Activated B cell treated with CpG ODN at 0.5 μM for 24 hours (primary cell): ENCODE measurements at regions of chr16 and their contacts with region 1.

Region 1: GRCh38 chr16:24975428-24975889 is 39.7 kb downstream of the ARHGAP17 start:
- DNase-seq: no peak
- ATAC-seq: peak; percentile 62
- H3K4me3 Mint-ChIP-seq: peak overlapping the region; percentile 12
- H3K27ac Mint-ChIP-seq: peak overlapping the region; percentile 96
- H3K4me1 Mint-ChIP-seq: peaks cover 83% of the 10 kb centered on the region
- H3K27me3 Mint-ChIP-seq: no peaks in the 10 kb centered on the region
- CTCF ChIP-seq: no peak

Region 2: DNA sequence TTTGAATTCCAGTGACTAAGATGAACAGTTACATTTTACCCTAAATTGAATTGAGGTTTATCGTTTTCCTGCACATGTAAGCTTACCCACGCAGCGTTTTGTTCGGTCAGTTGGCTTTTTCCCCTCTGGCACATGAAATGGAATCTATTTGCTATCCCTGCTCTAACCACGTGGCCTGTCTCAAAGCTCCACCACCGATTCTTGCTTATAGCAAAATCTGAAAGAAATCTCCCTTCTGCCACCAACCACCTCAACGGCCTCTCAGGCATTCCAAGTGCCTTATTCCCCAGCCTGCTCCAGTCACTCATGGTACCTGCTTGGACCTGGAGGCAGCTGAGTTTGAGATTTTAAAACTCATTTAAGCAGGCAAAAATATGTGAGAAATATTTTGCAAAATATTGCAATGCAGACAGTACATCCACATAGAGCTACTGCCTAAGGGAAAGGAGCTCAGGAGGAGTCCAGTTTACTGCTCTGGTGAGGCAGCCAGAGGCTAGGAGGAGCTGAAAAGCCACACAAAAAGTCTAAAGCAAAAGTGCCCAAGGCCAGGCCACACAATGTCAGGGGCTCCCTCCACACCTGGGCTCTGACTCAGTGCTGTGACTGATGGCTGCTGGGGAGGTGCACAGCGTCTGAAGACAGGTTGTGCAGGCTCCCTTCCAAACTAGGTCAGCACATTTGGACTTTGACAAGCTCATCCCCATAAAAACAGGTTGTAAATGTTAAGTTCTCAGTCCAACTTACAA is 13.3 kb after region 1 on chr16:
- CTCF ChIA-PET with region 1: interaction called, 5 read pairs
- POLR2A ChIA-PET with region 1: interaction called, 15 read pairs
- intact Hi-C with region 1: loop called (anchors 1 kb)
- DNase-seq: no peak
- ATAC-seq: peak; percentile 53
- H3K4me3 Mint-ChIP-seq: peak overlapping the region; percentile 36
- H3K27ac Mint-ChIP-seq: peak overlapping the region; percentile 78
- H3K4me1 Mint-ChIP-seq: peaks cover 95% of the 10 kb centered on the region
- H3K27me3 Mint-ChIP-seq: no peaks in the 10 kb centered on the region
- CTCF ChIP-seq: no peak

Region 3: DNA sequence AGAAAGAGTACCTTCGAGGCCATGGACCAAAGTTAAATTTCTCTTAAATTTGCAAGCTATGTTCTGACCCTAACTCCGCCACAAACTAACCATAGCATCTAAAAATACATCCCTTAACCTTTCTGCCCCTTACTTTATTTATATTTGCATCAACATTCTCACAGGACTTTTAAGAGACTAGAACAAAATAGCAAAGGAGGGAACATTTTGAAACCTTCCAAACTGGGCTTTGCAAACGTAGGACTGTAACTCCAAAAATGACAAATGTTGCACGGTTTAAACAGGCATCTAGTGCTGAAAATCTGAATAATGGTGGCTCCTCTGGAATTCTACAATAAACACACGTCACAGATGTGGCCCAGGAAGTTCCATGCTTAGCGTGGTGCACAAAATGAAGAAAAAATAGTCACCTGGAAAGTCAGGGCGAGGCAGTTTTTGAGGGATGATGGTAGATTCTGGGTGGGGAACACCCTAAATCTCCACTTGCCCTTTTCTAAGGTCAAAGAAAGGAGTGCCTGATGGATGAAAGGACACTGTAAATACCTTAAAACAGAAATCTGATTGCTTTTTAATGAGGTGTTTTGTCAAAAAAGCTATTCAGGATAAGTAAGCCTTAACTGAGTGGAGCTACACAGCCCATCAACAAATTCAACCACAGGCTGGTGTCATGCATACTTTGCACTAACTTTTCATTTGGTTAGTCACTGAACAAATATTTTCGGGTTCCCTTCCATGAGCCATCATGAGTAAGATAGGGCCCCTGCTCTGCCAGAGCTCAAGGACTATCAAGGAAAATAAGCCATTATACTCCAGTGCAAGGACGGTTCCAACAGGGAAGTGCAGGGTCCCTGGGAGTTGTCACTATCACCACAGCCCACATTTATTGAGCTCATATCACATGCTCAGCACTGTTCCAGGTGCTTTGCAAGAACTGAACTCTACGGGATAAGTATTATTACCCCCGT is 18.5 kb after region 1 on chr16:
- CTCF ChIA-PET with region 1: interaction called, 5 read pairs
- POLR2A ChIA-PET with region 1: interaction called, 15 read pairs
- intact Hi-C with region 1: loop called (anchors 2 kb)
- DNase-seq: no peak
- ATAC-seq: no peak
- H3K4me3 Mint-ChIP-seq: peak overlapping the region; percentile 36
- H3K27ac Mint-ChIP-seq: peak overlapping the region; percentile 81
- H3K4me1 Mint-ChIP-seq: peaks cover 97% of the 10 kb centered on the region
- H3K27me3 Mint-ChIP-seq: no peaks in the 10 kb centered on the region
- CTCF ChIP-seq: no peak

Region 4: GRCh38 chr16:25031441-25032307 is 56.2 kb after region 1 on chr16:
- CTCF ChIA-PET with region 1: no interaction called
- POLR2A ChIA-PET with region 1: interaction called, 19 read pairs
- intact Hi-C with region 1: loop called (anchors 1 kb)
- DNase-seq: peak; percentile 69
- ATAC-seq: peak; percentile 95
- H3K4me3 Mint-ChIP-seq: peak overlapping the region; percentile 95
- H3K27ac Mint-ChIP-seq: peak overlapping the region; percentile 90
- H3K4me1 Mint-ChIP-seq: peaks cover 50% of the 10 kb centered on the region
- H3K27me3 Mint-ChIP-seq: no peaks in the 10 kb centered on the region
- CTCF ChIP-seq: no peak

Region 5: DNA sequence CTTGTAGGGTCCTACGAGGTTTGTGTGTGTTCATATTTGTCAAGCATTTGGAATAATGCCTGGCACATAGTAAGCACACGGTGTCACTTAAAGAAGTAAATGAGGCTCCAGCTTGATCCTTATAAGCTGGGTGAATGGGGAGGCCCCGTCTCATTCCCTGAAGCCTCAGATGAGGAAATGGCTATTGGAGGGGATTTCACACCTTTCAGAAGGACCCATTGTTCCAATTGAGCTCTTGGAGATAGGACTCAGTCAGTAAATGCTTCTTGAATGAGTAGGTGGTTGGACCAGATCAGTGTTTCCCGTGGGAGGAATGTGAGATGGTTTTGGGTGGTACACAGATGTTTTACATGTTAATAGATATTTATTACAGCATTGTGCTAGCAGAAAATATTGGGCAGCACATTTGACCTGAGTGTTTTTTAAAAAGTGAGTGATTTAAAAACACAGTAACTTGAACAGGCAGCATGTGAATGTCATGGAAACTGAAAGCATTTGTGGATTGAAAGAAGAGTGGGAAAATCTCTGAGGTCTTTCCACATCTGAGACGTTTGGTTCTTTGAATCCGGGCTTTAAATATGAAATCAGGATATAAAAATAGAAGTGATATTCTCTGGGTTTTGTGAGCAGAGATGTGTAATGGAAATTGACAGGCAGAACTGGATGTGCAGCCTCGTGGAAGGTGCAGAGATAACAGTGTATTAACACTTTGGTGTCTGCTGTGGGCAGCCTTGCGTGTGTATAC is 76.1 kb after region 1 on chr16:
- CTCF ChIA-PET with region 1: no interaction called
- POLR2A ChIA-PET with region 1: interaction called, 16 read pairs
- intact Hi-C with region 1: loop called (anchors 1 kb)
- DNase-seq: no peak
- ATAC-seq: no peak
- H3K4me3 Mint-ChIP-seq: no peak overlapping the region
- H3K27ac Mint-ChIP-seq: peak overlapping the region; percentile 54
- H3K4me1 Mint-ChIP-seq: peaks cover 49% of the 10 kb centered on the region
- H3K27me3 Mint-ChIP-seq: no peaks in the 10 kb centered on the region
- CTCF ChIP-seq: no peak

Region 6: GRCh38 chr16:25224731-25225319 is 249.4 kb after region 1 on chr16:
- CTCF ChIA-PET with region 1: interaction called, 3 read pairs
- POLR2A ChIA-PET with region 1: no interaction called
- intact Hi-C with region 1: loop called (anchors 10 kb)
- DNase-seq: no peak
- ATAC-seq: no peak
- H3K4me3 Mint-ChIP-seq: no peak overlapping the region
- H3K27ac Mint-ChIP-seq: no peak overlapping the region
- H3K4me1 Mint-ChIP-seq: no peaks in the 10 kb centered on the region
- H3K27me3 Mint-ChIP-seq: no peaks in the 10 kb centered on the region
- CTCF ChIP-seq: no peak